CD4-positive, alpha-beta T cell (primary cell): ENCODE measurements at regions of chr15 and their contacts with region 1.

Region 1: DNA sequence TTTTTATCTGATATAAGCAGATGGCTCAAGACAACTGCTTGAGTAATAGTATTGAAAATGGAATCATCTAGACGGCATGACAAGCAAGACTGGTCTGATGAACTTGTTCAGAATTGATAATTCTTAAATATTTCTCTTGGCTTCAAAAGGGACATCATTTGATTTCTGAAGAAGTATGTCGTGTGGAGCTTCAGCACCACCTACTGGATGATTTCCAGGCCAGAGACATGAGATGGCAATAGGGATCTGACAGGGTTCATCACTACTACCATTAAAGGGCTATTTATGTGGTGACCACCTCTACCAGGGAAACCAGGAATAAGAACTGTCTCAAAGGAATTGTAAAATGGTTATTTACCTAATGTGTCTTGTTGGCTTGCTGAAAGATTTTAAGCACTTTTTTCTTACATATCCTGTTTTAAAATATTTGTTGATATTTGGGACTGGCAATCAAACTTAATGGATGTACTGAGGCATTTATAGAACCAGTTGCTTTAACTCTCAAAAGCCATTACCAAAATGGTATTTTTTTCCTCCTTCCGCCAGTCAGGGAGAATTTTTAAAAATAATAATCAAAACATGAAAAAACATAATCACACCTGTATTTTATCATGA is 99.5 kb upstream of the FAM98B start:
- DNase-seq: peak; percentile 4 to 74 (median 40)
- ATAC-seq: no peak
- H3K4me3 ChIP-seq: no peak overlapping the region
- H3K4me3 Mint-ChIP-seq: no peak overlapping the region
- H3K27ac ChIP-seq: no peak overlapping the region
- H3K27ac Mint-ChIP-seq: no peak overlapping the region
- H3K4me1 ChIP-seq: no peaks in the 10 kb centered on the region
- H3K4me1 Mint-ChIP-seq: no peaks in the 10 kb centered on the region
- H3K27me3 ChIP-seq: no peaks in the 10 kb centered on the region
- H3K27me3 Mint-ChIP-seq: no peaks in the 10 kb centered on the region
- CTCF ChIP-seq: peak; percentile 70

Region 2: DNA sequence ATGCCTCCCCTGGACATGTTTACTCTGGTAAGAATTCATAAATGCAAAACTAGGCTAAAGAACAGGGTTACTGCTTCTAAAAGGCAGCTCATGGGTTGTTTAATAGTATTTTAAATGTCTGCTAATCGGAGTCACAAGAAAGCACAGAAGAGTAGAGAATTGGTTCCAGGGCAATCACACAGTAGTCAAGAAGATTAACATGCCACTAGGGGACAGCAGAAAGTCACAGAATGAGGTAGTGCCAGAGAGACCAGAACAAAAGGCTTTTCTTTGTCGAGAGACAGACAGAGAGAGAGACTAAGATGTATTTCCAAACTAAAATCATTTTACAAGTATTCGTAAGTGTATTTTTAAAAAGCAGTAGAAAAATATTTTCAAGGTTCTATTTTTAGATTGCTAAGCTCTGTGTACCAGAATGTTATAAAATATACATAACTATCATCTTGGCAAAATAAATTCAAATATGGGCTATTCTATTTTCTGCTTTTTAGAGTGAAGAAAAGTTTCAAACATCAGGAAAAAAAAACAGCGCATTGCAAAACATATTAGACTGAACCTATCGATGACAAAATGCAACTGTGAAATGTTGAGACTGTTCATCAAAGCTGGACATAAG is 1853.3 kb before region 1 on chr15:
- CTCF ChIA-PET with region 1: no interaction called
- POLR2A ChIA-PET with region 1: no interaction called
- intact Hi-C with region 1: loop called in 1 of 2 experiments (anchors 10 kb)
- DNase-seq: peak in 3 of 14 experiments; percentile 21 to 31 (median 28)
- ATAC-seq: no peak
- H3K4me3 ChIP-seq: no peak overlapping the region
- H3K4me3 Mint-ChIP-seq: no peak overlapping the region
- H3K27ac ChIP-seq: no peak overlapping the region
- H3K27ac Mint-ChIP-seq: no peak overlapping the region
- H3K4me1 ChIP-seq: no peaks in the 10 kb centered on the region
- H3K4me1 Mint-ChIP-seq: no peaks in the 10 kb centered on the region
- H3K27me3 ChIP-seq: peaks cover 0 to 10% of the 10 kb centered on the region in 2 experiments
- H3K27me3 Mint-ChIP-seq: peaks cover 34% of the 10 kb centered on the region
- CTCF ChIP-seq: peak; percentile 42

Region 3: DNA sequence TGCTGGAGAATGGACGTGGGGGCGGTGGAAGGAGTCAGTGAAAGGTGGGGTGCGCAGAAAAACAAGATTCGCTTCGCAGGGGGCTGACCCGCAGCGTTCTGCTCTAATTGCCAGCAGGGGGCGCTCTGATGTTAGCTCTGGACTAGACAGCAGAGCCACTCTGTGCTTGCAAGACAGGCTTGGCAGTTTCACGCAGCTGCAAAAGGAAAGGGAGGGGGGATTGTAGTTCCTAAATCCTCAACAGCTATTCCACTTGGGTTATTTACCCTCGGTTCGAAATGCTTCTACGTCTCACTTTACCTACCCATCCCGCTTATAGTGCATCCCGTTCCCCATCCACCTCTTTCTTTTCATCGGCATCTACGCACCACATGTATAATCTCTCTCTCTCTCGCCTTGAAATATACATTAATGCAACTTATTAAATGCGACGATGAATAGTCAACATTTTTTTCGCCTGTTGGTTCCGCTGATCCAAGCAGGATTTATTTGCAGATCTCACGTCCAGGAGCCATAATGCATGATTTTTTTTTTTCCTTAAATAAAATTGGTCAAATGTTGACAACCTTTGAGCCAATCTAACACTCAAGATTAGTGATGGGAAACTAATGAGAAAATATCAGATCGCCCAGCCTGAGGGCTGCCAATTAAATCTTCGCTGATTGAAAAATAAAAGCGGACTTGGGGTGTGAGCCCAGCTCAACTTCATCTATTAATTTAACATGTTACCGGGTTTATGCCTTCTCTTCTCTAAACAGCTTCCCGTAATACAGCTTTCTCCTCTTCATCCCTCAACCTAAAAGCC is 1470.5 kb before region 1 on chr15:
- CTCF ChIA-PET with region 1: no interaction called
- POLR2A ChIA-PET with region 1: no interaction called
- intact Hi-C with region 1: loop called in 1 of 2 experiments (anchors 5 kb)
- DNase-seq: peak in 11 of 14 experiments; percentile 5 to 62 (median 28)
- ATAC-seq: no peak
- H3K4me3 ChIP-seq: no peak overlapping the region
- H3K4me3 Mint-ChIP-seq: no peak overlapping the region
- H3K27ac ChIP-seq: no peak overlapping the region
- H3K27ac Mint-ChIP-seq: no peak overlapping the region
- H3K4me1 ChIP-seq: peaks cover 4% of the 10 kb centered on the region
- H3K4me1 Mint-ChIP-seq: peaks cover 13% of the 10 kb centered on the region
- H3K27me3 ChIP-seq: peaks cover 84 to 99% of the 10 kb centered on the region in 2 experiments
- H3K27me3 Mint-ChIP-seq: peaks cover 96% of the 10 kb centered on the region
- CTCF ChIP-seq: no peak

Region 4: DNA sequence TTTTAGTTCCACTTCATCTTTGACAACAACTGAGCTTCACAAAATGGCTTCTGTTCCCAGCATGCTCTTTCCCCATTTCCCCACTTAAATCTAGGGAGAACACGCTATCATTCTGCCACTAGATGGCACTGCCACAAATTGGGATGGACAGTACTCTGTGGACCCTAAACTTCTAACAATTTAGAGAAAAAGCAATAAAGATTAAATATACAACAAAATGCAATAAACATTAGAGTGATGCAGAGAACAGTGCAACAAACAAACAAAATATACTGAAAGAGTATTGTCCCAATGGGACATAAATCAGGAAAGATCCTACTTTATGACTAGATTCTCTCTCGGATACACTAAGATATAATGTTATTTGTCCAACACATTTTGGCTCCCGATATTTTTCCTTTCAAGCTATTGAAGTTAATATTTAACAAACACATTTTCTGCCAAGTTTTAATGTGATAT is 589.7 kb before region 1 on chr15:
- CTCF ChIA-PET with region 1: no interaction called
- POLR2A ChIA-PET with region 1: no interaction called
- intact Hi-C with region 1: loop called (anchors 2 kb)
- DNase-seq: peak in 4 of 14 experiments; percentile 10 to 31 (median 24)
- ATAC-seq: no peak
- H3K4me3 ChIP-seq: no peak overlapping the region
- H3K4me3 Mint-ChIP-seq: no peak overlapping the region
- H3K27ac ChIP-seq: no peak overlapping the region
- H3K27ac Mint-ChIP-seq: no peak overlapping the region
- H3K4me1 ChIP-seq: no peaks in the 10 kb centered on the region
- H3K4me1 Mint-ChIP-seq: peaks cover 19% of the 10 kb centered on the region
- H3K27me3 ChIP-seq: no peaks in the 10 kb centered on the region
- H3K27me3 Mint-ChIP-seq: peaks cover 4% of the 10 kb centered on the region
- CTCF ChIP-seq: peak; percentile 67

Region 5: GRCh38 chr15:37995461-37996347 is 358.7 kb before region 1 on chr15:
- CTCF ChIA-PET with region 1: no interaction called
- POLR2A ChIA-PET with region 1: no interaction called
- intact Hi-C with region 1: loop called (anchors 2 to 5 kb)
- DNase-seq: peak in 3 of 14 experiments; percentile 7 to 39 (median 28)
- ATAC-seq: no peak
- H3K4me3 ChIP-seq: no peak overlapping the region
- H3K4me3 Mint-ChIP-seq: no peak overlapping the region
- H3K27ac ChIP-seq: no peak overlapping the region
- H3K27ac Mint-ChIP-seq: no peak overlapping the region
- H3K4me1 ChIP-seq: no peaks in the 10 kb centered on the region
- H3K4me1 Mint-ChIP-seq: no peaks in the 10 kb centered on the region
- H3K27me3 ChIP-seq: no peaks in the 10 kb centered on the region
- H3K27me3 Mint-ChIP-seq: peaks cover 4% of the 10 kb centered on the region
- CTCF ChIP-seq: no peak

Region 6: GRCh38 chr15:38252481-38253412 is 101.7 kb before region 1 on chr15 and contains the start of gene SPRED1:
- CTCF ChIA-PET with region 1: no interaction called
- POLR2A ChIA-PET with region 1: no interaction called
- intact Hi-C with region 1: loop called in 1 of 2 experiments (anchors 10 kb)
- DNase-seq: peak in 8 of 14 experiments; percentile 0 to 34 (median 5)
- ATAC-seq: peak; percentile 6
- H3K4me3 ChIP-seq: peak within 1 kb of the TSS; percentile 75
- H3K4me3 Mint-ChIP-seq: peak within 1 kb of the TSS; percentile 88
- H3K27ac ChIP-seq: no peak within 1 kb of the TSS
- H3K27ac Mint-ChIP-seq: peak within 1 kb of the TSS; percentile 57
- H3K4me1 ChIP-seq: peaks cover 24% of the 10 kb centered on the region
- H3K4me1 Mint-ChIP-seq: peaks cover 36% of the 10 kb centered on the region
- H3K27me3 ChIP-seq: peaks cover 8 to 17% of the 10 kb centered on the region in 2 experiments
- H3K27me3 Mint-ChIP-seq: peaks cover 39% of the 10 kb centered on the region
- CTCF ChIP-seq: no peak
- total RNA-seq, gene SPRED1: 0.03 to 0.05 TPM